ENCODE measurements at regions of chr20 and their contacts with region 1.

Region 1: GRCh38 chr20:49610701-49611538 is 43.0 kb upstream of the PTGIS start:
- DNase-seq: no peak
- H3K4me3 ChIP-seq: peak overlapping the region; percentile 6; the same call in 1 of the 2 replicates
- H3K27me3 ChIP-seq: peaks cover 4% of the 10 kb centered on the region
- CTCF ChIP-seq: peak; percentile 99

Region 2: DNA sequence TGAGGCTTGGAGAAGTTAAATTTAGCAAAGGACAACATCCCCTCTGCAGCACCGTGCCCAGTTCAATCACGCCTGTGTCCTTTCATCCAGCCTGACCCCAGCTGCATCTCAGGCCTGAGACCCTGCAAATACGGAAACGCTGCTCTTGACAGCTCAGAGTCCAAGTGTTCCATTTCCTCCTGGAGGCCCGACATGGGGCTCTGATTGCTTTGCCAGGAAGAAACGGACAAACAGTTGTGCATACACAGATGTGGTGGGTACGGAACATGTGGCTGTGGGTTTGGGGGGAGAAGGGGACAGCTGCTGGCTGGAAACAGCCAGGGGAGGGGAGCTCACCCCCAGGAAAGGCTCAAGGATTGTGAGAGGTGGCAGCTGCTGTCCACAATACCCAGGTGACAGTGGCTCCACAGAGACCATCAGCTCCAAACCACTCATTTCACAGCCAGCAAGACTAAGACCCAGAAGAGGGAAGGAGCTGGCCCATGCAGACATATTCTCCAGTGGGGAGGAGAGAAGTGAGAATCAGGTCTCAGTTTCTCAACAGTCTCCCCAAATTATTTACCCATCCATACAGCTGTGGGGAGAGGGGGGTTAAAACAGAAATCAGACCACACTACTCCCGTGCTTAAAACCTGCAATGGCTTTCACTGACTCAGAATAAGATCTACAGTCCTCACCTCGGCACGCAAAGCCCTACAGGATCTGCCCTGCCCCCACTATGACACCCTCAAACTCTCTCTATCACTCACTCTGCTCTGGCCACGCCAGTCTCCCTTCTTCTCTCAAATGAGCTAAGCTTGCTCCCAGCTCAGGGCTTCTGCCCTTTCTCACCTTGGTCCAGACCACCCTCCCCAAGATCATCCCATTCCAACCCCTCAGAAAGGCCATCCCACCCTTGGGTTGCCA is 872.3 kb before region 1 on chr20:
- CTCF ChIA-PET with region 1: no interaction called
- POLR2A ChIA-PET with region 1: no interaction called
- DNase-seq: no peak
- H3K4me3 ChIP-seq: no peak overlapping the region
- H3K27me3 ChIP-seq: no peaks in the 10 kb centered on the region
- CTCF ChIP-seq: no peak

Region 3: DNA sequence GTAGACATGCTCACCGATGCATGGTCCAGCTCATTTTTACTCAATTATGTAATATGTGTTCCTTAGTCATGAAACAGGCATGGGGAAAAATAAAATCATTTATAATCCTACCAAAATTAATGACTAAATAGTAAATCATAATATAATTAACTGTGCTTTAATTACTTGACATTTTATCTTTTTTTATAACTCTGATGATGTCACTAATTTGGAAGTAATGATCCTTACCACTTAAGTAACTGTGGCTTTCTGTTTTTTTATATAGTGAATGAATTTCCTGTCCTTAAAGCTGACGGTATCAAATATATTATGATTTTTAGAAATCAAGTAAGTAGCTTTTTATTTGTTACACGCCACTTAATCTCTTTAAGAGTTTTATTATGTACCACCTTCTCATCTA is 532.6 kb before region 1 on chr20:
- CTCF ChIA-PET with region 1: no interaction called
- POLR2A ChIA-PET with region 1: no interaction called
- DNase-seq: no peak
- H3K4me3 ChIP-seq: no peak overlapping the region
- H3K27me3 ChIP-seq: no peaks in the 10 kb centered on the region
- CTCF ChIP-seq: no peak

Region 4: GRCh38 chr20:49435659-49436058 is 175.3 kb before region 1 on chr20:
- CTCF ChIA-PET with region 1: no interaction called
- POLR2A ChIA-PET with region 1: no interaction called
- DNase-seq: no peak
- H3K4me3 ChIP-seq: no peak overlapping the region
- H3K27me3 ChIP-seq: peaks cover 17% of the 10 kb centered on the region
- CTCF ChIP-seq: no peak

Region 5: DNA sequence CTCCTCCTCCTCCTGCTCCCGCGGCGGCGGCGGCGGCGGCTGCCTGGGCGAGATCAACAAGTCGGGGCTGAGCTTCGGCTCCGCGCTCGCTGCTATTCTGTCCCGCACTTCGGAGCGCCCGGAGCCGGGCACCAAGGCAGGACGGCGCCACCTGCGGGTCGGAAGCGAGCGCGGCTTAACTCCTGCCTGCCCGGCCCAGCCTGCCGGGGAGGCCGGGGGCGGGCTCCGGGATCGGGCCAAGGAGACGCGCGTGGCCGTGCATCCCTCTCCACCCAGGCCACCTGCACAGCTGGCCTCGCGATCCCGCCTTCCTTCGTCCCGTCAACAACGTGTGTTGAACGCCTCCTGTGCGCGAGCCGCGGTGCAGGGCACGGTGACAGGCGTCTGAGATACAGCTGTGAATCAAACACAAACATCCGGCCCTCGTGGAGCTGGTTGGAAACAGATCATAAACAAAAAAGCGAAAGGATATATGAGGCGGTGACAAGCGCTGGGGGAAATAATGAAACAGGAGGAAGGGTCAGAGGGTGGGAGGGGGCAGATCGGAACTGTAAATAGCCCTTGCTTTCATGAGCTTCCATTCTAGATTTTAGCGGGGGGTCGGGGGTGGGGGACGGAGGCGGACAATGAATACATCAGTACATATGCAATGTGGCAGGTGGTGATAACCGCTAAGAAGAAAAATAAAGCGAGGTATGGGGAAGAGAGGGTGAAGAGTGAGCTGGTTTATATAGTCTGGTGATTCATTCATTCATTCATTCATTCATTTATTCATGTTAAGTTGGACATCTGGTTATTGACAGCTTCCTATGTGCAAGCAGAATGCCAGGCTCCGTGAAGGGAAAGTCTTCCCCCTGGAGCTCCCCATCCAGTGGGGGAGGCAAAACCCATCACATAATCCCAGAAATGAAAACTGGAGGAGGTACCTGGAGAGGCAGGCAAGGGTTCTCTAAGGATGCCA is 126.5 kb before region 1 on chr20:
- CTCF ChIA-PET with region 1: interaction called, 13 read pairs
- POLR2A ChIA-PET with region 1: no interaction called
- DNase-seq: no peak
- H3K4me3 ChIP-seq: peak overlapping the region; percentile 42
- H3K27me3 ChIP-seq: peaks cover 15% of the 10 kb centered on the region
- CTCF ChIP-seq: peak; percentile 69

Region 6: GRCh38 chr20:49541733-49542513 is 69.0 kb before region 1 on chr20:
- CTCF ChIA-PET with region 1: interaction called, 485 read pairs
- POLR2A ChIA-PET with region 1: interaction called, 3 read pairs
- DNase-seq: no peak
- H3K4me3 ChIP-seq: no peak overlapping the region
- H3K27me3 ChIP-seq: no peaks in the 10 kb centered on the region
- CTCF ChIP-seq: peak; percentile 79

Region 7: GRCh38 chr20:49583669-49584417 is 27.1 kb before region 1 on chr20:
- CTCF ChIA-PET with region 1: interaction called, 10 read pairs
- POLR2A ChIA-PET with region 1: no interaction called
- DNase-seq: peak; percentile 85
- H3K4me3 ChIP-seq: no peak overlapping the region
- H3K27me3 ChIP-seq: no peaks in the 10 kb centered on the region
- CTCF ChIP-seq: peak; percentile 12; the same call in 1 of the 2 replicates

Region 8: GRCh38 chr20:49821870-49822331 is 211.0 kb after region 1 on chr20:
- CTCF ChIA-PET with region 1: interaction called, 14 read pairs
- POLR2A ChIA-PET with region 1: no interaction called
- DNase-seq: no peak
- H3K4me3 ChIP-seq: no peak overlapping the region
- H3K27me3 ChIP-seq: no peaks in the 10 kb centered on the region
- CTCF ChIP-seq: peak; percentile 58

Region 9: DNA sequence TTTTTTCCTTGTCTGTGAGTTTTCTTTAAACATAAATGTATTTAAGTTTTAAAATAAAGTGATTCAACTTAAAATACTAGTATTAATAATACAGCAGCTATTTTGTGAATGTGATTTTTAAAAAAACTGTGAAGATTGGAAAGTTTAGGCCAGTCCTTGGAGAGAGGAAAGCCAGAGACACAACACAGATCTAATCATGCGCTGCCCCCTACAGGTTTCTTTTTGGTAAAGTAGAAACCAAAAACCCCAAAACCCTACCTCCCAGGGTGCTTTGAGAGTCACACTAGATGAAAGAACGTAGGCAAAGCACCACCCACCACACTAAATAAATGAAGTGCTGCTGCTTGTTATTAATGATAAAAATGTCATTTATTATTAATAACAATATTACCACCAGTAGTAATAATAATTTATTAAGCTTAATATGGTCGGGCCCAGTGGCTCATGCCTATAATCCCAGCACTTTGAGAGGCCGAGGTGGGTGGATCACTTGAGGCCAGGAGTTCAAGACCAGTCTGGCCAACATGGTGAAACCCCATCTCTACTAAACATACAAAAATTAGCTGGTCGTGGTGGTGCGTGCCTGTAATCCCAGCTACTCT is 235.4 kb after region 1 on chr20:
- CTCF ChIA-PET with region 1: interaction called, 183 read pairs
- POLR2A ChIA-PET with region 1: no interaction called
- DNase-seq: no peak
- H3K4me3 ChIP-seq: no peak overlapping the region
- H3K27me3 ChIP-seq: no peaks in the 10 kb centered on the region
- CTCF ChIP-seq: peak; percentile 59

Region 10: GRCh38 chr20:49888345-49888966 is 277.5 kb after region 1 on chr20:
- CTCF ChIA-PET with region 1: interaction called, 100 read pairs
- POLR2A ChIA-PET with region 1: no interaction called
- DNase-seq: no peak
- H3K4me3 ChIP-seq: no peak overlapping the region
- H3K27me3 ChIP-seq: no peaks in the 10 kb centered on the region
- CTCF ChIP-seq: peak; percentile 92

Region 11: GRCh38 chr20:50070991-50071888 is 460.3 kb after region 1 on chr20:
- CTCF ChIA-PET with region 1: no interaction called
- POLR2A ChIA-PET with region 1: no interaction called
- DNase-seq: no peak
- H3K4me3 ChIP-seq: peak overlapping the region; percentile 30
- H3K27me3 ChIP-seq: no peaks in the 10 kb centered on the region
- CTCF ChIP-seq: peak; percentile 99

Measured in BJ (cell line).